ENCODE measurements at regions of chr1 and their contacts with region 1.

Region 1: DNA sequence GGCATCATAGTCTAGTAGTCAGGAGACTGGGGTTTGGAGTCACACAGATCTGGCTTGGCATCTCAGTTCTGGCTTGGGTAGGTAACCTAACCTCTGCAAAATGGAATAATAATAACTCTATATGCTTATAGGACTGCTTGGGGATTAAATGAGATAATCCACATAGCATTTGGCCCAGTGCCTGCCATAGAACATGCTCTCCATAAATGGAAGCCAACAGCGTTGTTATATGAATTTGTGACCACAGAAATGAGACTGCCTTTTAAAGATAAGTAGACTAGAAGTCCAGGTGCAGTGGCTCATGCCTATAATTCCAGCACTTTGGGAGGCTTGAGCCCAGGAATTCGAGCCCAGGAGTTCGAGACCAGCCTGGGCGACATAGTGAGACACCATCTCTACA is 4.0 kb upstream of the OPRD1 start:
- DNase-seq: no peak
- H3K4me3 ChIP-seq: no peak overlapping the region
- H3K27ac ChIP-seq: no peak overlapping the region
- H3K4me1 ChIP-seq: no peaks in the 10 kb centered on the region
- H3K27me3 ChIP-seq: peaks cover 23% of the 10 kb centered on the region
- CTCF ChIP-seq: no peak

Region 2: DNA sequence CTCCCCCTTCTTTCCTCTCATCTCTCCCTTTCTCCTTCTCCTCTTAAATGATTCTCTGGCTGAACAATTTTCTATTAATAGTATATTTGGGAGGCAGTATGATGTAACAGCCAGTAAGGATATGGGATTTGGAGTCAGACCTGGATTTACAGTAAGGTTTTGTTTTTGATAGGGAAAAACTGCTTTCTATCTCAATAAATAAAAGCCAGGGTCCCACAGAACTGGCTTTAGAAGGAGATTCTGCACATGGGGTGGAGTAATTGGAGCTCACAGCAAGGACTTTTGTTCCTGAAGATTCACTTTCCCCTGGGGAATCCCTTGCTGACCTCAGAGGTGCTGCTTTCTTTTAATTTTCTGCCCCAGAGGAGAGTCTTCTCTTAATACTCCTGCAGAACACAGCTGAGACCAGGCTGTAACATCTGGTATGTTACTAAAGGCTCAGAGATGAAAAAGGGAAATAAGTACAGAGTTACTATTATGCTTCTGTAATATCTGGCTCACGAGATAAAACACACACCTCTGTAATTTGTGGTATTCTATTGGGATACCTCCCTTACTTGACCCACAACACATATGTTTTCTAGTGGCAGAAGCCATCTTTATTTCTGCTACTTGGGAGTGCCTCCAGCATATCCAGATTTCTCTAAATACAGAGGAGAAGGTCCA is 119.8 kb after region 1 on chr1:
- CTCF ChIA-PET with region 1: no interaction called
- POLR2A ChIA-PET with region 1: interaction called, 21 read pairs
- intact Hi-C with region 1: no loop called
- DNase-seq: peak; percentile 67
- H3K4me3 ChIP-seq: peak overlapping the region; percentile 27
- H3K27ac ChIP-seq: peak overlapping the region; percentile 86
- H3K4me1 ChIP-seq: peaks cover 40% of the 10 kb centered on the region
- H3K27me3 ChIP-seq: no peaks in the 10 kb centered on the region
- CTCF ChIP-seq: no peak